ENCODE measurements at regions of chr17 and their contacts with region 1.

Region 1: GRCh38 chr17:48543107-48543853 is 1.6 kb downstream of the HOXB2 start:
- DNase-seq: peak; percentile 67
- ATAC-seq: peak; percentile 0; the same call in 1 of the 2 replicates
- H3K4me3 ChIP-seq: peak overlapping the region; percentile 96
- H3K27ac ChIP-seq: peak overlapping the region; percentile 99
- H3K4me1 ChIP-seq: peaks cover 32% of the 10 kb centered on the region
- H3K27me3 ChIP-seq: no peaks in the 10 kb centered on the region
- CTCF ChIP-seq: no peak
- POLR2A ChIP-seq: no peak; the same call in 1 of the 2 replicates
- RAD21 ChIP-seq: no peak

Region 2: DNA sequence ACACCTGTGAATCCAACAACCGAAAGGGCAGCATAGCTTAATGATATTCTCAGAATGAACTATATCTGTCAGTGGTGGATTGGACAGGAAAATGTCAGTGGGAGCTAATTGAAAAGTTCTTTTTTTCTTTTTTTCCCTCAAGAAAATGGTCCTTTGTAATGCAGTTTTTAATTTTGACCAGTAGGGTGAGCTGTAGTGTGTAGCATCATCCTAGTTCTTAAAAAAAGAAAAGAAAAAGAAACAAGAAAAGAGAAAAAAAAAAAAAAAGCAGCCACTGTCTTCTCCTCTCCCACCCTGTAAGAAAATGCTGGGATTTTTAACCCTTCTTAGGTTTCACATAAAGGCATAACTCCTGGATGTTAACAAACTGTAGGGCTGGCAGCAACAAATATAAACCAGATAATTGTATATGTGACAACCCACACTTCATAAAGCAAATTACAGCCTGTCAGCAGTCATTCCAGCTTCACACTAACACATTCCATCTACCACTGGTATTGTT is 191.4 kb before region 1 on chr17:
- CTCF ChIA-PET with region 1: no interaction called
- POLR2A ChIA-PET with region 1: no interaction called
- dilution Hi-C with region 1: no loop called
- in situ Hi-C with region 1: loop called (anchors 10 kb)
- intact Hi-C with region 1: loop called (anchors 2 kb)
- DNase-seq: peak; percentile 67
- ATAC-seq: peak; percentile 63
- H3K4me3 ChIP-seq: no peak overlapping the region
- H3K27ac ChIP-seq: no peak overlapping the region
- H3K4me1 ChIP-seq: 0 out of 2 replicates have a peak, but pooled peaks cover 1% of the 10 kb centered on the region
- H3K27me3 ChIP-seq: peaks cover 32% of the 10 kb centered on the region
- CTCF ChIP-seq: peak; percentile 78
- POLR2A ChIP-seq: no peak
- RAD21 ChIP-seq: peak; percentile 77

Region 3: DNA sequence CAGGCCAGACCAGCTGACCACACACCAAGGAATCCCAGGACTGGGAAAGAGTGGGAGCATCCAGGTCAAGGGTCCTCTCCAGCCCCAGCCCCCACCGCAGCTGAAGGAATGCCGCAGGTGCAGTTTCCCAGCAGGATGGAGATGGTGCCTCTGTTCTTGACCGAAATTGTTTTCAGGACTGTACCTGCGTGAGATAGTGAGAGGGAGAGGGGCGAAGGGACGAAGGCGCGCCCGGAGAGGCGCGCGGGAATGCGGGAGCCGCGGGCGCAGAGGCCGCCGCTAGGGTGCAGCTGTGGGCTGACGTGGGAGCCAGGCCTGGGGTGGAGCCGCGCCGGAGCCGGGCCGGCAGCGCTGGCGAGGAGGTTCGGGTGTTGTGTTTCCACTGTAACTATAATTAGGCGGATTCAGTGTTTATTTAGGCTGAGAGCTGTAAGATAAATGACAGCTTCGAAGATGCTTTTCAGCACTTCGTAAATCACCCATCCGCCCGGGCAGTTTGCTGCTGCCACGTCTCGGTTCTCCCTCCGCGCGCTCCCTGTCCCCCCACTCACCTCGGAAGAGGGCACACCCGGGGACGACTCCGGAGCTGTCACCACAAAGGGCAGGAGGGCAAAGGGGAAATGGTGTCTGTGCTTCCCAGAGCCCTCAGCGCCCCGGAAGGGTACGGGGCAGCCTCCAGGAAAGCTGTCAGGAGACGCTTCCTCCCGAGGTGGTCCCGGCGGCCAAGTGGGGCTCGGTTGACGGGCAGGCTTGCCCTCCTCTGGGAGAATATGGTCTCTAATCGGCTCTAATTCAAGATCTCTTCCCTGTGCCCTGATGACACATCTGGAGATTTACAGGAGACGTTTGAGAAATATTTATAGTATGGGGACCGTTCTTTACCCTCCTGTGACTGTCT is 50.6 kb before region 1 on chr17:
- CTCF ChIA-PET with region 1: interaction called, 8 read pairs
- POLR2A ChIA-PET with region 1: interaction called, 3 read pairs
- dilution Hi-C with region 1: no loop called
- in situ Hi-C with region 1: loop called (anchors 5 kb)
- intact Hi-C with region 1: loop called (anchors 2 kb)
- DNase-seq: peak; percentile 74
- ATAC-seq: peak; percentile 91
- H3K4me3 ChIP-seq: peak overlapping the region; percentile 39
- H3K27ac ChIP-seq: peak overlapping the region; percentile 38
- H3K4me1 ChIP-seq: peaks cover 22% of the 10 kb centered on the region
- H3K27me3 ChIP-seq: no peaks in the 10 kb centered on the region
- CTCF ChIP-seq: peak; percentile 86
- POLR2A ChIP-seq: no peak
- RAD21 ChIP-seq: peak; percentile 86

Region 4: GRCh38 chr17:48555258-48556228 is 12.3 kb after region 1 on chr17:
- CTCF ChIA-PET with region 1: interaction called, 3 read pairs
- POLR2A ChIA-PET with region 1: interaction called, 10 read pairs
- dilution Hi-C with region 1: no loop called
- in situ Hi-C with region 1: no loop called
- intact Hi-C with region 1: no loop called
- DNase-seq: peak; percentile 99
- ATAC-seq: peak; percentile 22
- H3K4me3 ChIP-seq: peak overlapping the region; percentile 48
- H3K27ac ChIP-seq: peak overlapping the region; percentile 93
- H3K4me1 ChIP-seq: peaks cover 56% of the 10 kb centered on the region
- H3K27me3 ChIP-seq: no peaks in the 10 kb centered on the region
- CTCF ChIP-seq: 0 out of 2 replicates have a peak, but pooled peaks have one; percentile 4
- POLR2A ChIP-seq: no peak
- RAD21 ChIP-seq: no peak; the same call in 1 of the 2 replicates

Measured in IMR-90 (cell line).